ENCODE measurements at regions of chr20 and their contacts with region 1.

Region 1: GRCh38 chr20:11204926-11205768 is 531.3 kb upstream of the JAG1 start:
- DNase-seq: peak; percentile 53 to 89
- ATAC-seq: peak; percentile 62 to 76
- H3K4me3 ChIP-seq: no peak overlapping the region
- H3K27ac ChIP-seq: peak overlapping the region; percentile 82 to 87
- H3K4me1 ChIP-seq: peaks cover 61% of the 10 kb centered on the region
- CTCF ChIP-seq: peak; percentile 89
- EP300 ChIP-seq: no peak
- POLR2A ChIP-seq: no peak
- RAD21 ChIP-seq: peak; percentile 84 to 91

Region 2: GRCh38 chr20:10660661-10661060 is 544.5 kb before region 1 on chr20:
- CTCF ChIA-PET with region 1: no interaction called
- POLR2A ChIA-PET with region 1: interaction called, 13 read pairs
- DNase-seq: no peak
- ATAC-seq: peak in 1 of 2 experiments; percentile 2; a peak in 1 of 6 replicates
- H3K4me3 ChIP-seq: no peak overlapping the region
- H3K27ac ChIP-seq: peak overlapping the region in 1 of 2 experiments; percentile 51; a peak in 3 of 6 replicates
- H3K4me1 ChIP-seq: peaks cover 97% of the 10 kb centered on the region
- CTCF ChIP-seq: no peak
- EP300 ChIP-seq: no peak
- POLR2A ChIP-seq: no peak
- RAD21 ChIP-seq: no peak

Region 3: GRCh38 chr20:11001767-11002540 is 203.2 kb before region 1 on chr20:
- CTCF ChIA-PET with region 1: interaction called, 14 read pairs
- POLR2A ChIA-PET with region 1: no interaction called
- DNase-seq: peak; percentile 91 to 98
- ATAC-seq: peak; percentile 97 to 98
- H3K4me3 ChIP-seq: no peak overlapping the region
- H3K27ac ChIP-seq: peak overlapping the region; percentile 84 to 85
- H3K4me1 ChIP-seq: peaks cover 29% of the 10 kb centered on the region
- CTCF ChIP-seq: no peak
- EP300 ChIP-seq: peak; percentile 93; a peak in 4 of 5 replicates
- POLR2A ChIP-seq: no peak
- RAD21 ChIP-seq: peak; percentile 53 to 73; a peak in 4 of 5 replicates

Region 4: DNA sequence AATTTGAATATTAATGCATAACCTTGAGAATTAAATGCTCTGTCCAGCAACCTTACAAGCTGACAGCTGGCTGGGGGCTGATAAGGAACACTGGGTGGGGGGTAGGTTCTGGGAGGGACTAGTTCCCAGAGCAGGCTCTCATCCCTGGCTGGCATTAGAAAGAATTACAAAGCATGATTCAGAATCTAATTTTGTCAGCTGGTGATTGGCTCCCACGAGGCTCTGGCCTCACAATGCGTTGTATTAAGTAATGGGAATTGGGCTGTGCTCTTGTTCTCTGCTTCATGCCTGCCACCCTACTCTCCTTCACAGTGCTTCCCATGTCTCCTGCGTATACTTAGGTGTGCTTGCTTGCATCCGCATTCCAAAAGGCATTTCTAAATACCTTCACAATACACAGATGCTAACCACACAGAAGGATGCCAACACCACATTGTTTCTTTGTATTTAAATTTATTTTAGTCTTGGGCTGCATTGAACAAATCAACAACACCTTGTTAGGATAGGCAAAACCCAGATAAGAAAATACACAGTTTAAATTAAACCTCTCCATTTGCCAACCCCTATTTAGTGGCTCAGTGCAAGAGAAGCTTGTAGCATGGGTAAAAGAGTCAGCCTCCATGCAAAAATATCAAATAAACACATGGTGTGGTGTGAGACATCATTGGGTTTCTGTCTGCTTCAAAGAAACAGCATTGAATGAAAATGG is 96.9 kb before region 1 on chr20:
- CTCF ChIA-PET with region 1: no interaction called
- POLR2A ChIA-PET with region 1: no interaction called
- DNase-seq: no peak
- ATAC-seq: no peak
- H3K4me3 ChIP-seq: no peak overlapping the region
- H3K27ac ChIP-seq: no peak overlapping the region
- H3K4me1 ChIP-seq: peaks cover 8% of the 10 kb centered on the region; the same call in 2 of the 3 replicates
- CTCF ChIP-seq: no peak
- EP300 ChIP-seq: no peak
- POLR2A ChIP-seq: no peak
- RAD21 ChIP-seq: no peak

Region 5: DNA sequence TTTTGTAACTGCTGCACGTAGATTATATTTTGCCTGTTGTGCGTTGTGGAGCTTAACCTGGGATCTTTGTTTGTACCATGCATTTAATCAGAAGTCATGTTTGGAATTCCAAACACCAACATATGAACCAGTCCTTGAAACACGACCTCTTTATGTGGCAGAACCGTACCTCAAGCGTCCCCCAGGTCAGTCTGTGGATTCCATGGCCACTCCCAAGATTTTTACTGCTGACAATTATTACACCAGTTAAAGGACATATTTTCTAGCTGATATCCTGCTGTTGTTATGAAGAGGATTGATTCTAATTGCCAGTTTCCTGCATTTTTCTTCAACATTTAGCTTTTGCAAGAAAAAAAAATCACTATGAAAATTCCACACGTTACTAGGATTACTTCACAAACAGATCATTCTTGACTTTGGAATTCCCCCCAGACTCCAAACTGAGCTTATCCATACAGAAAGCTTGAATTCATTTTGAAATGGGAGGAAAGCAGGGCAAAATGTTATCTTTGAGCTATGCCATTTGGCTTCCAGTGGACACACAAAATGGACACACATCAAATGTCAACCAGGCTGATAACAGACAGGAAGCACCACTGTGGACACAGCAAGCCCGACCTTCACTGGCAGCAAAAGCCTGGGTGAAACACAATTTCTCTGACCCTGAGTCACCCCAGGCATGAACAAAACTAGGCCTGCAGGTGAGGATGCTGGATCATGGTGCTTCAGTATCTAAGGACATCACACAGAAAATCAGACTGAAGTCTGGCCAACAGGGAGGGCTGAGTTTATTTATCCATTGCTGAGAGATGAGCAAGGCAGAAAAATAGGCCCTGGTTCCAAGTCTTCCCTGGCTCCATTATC is 11.5 kb after region 1 on chr20:
- CTCF ChIA-PET with region 1: interaction called, 53 read pairs
- POLR2A ChIA-PET with region 1: interaction called, 20 read pairs
- DNase-seq: peak; percentile 16 to 81
- ATAC-seq: peak; percentile 69 to 91
- H3K4me3 ChIP-seq: no peak overlapping the region
- H3K27ac ChIP-seq: peak overlapping the region; percentile 70 to 85
- H3K4me1 ChIP-seq: peaks cover 34% of the 10 kb centered on the region
- CTCF ChIP-seq: no peak
- EP300 ChIP-seq: peak in 1 of 2 experiments; percentile 78; a peak in 4 of 5 replicates
- POLR2A ChIP-seq: no peak
- RAD21 ChIP-seq: peak; percentile 21 to 36; a peak in 2 of 5 replicates

Region 6: GRCh38 chr20:11267131-11267761 is 62.1 kb after region 1 on chr20:
- CTCF ChIA-PET with region 1: interaction called, 16 read pairs
- POLR2A ChIA-PET with region 1: interaction called, 18 read pairs
- DNase-seq: peak; percentile 93 to 97
- ATAC-seq: peak; percentile 93 to 97
- H3K4me3 ChIP-seq: no peak overlapping the region
- H3K27ac ChIP-seq: peak overlapping the region; percentile 75 to 87
- H3K4me1 ChIP-seq: peaks cover 43% of the 10 kb centered on the region
- CTCF ChIP-seq: no peak; the same call in 2 of the 3 replicates
- EP300 ChIP-seq: peak; percentile 86 to 87; a peak in 4 of 5 replicates
- POLR2A ChIP-seq: no peak
- RAD21 ChIP-seq: peak; percentile 60 to 82

Region 7: DNA sequence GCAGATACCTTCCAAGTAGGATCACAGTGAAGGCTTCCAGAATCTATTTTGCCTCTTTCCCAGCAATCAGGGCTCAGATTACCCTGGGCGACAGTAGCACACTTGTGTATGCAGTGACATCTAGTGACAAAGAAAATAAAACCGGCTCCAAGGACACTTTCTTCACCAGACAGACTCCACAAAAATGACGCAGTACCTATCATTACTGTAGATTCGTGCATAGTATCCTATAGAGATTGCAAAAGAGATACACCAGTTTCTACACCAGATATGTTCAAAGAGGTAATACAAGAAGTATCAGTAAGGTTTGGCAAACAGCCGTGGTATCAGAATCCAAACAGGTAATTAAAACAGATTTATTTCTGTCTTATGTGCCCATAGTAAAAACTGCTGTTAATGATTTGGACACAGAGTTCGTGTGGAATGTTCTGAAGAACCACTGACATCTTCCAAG is 69.0 kb after region 1 on chr20:
- CTCF ChIA-PET with region 1: interaction called, 17 read pairs
- POLR2A ChIA-PET with region 1: no interaction called
- DNase-seq: peak; percentile 86 to 90
- ATAC-seq: peak; percentile 93 to 95
- H3K4me3 ChIP-seq: no peak overlapping the region
- H3K27ac ChIP-seq: peak overlapping the region; percentile 62 to 70
- H3K4me1 ChIP-seq: peaks cover 36% of the 10 kb centered on the region
- CTCF ChIP-seq: peak; percentile 96
- EP300 ChIP-seq: no peak
- POLR2A ChIP-seq: no peak
- RAD21 ChIP-seq: peak; percentile 99 to 100

Region 8: GRCh38 chr20:11323816-11324215 is 118.7 kb after region 1 on chr20:
- CTCF ChIA-PET with region 1: no interaction called
- POLR2A ChIA-PET with region 1: no interaction called
- DNase-seq: no peak
- ATAC-seq: no peak
- H3K4me3 ChIP-seq: no peak overlapping the region
- H3K27ac ChIP-seq: no peak overlapping the region
- H3K4me1 ChIP-seq: no peaks in the 10 kb centered on the region
- CTCF ChIP-seq: no peak
- EP300 ChIP-seq: no peak
- POLR2A ChIP-seq: no peak
- RAD21 ChIP-seq: no peak

Region 9: GRCh38 chr20:11454966-11455799 is 250.0 kb after region 1 on chr20:
- CTCF ChIA-PET with region 1: no interaction called
- POLR2A ChIA-PET with region 1: no interaction called
- DNase-seq: peak; percentile 58 to 91
- ATAC-seq: peak; percentile 83 to 85
- H3K4me3 ChIP-seq: peak overlapping the region; percentile 24
- H3K27ac ChIP-seq: peak overlapping the region; percentile 88 to 93
- H3K4me1 ChIP-seq: peaks cover 62% of the 10 kb centered on the region
- CTCF ChIP-seq: no peak
- EP300 ChIP-seq: peak; percentile 44 to 45; a peak in 3 of 5 replicates
- POLR2A ChIP-seq: no peak
- RAD21 ChIP-seq: peak; percentile 26 to 44; a peak in 4 of 5 replicates